ENCODE measurements at regions of chr20 and their contacts with region 1.

Region 1: GRCh38 chr20:17431621-17432364 is 99.4 kb downstream of the BFSP1 start:
- DNase-seq: peak; percentile 47
- H3K4me3 ChIP-seq: no peak overlapping the region
- H3K27ac ChIP-seq: no peak overlapping the region
- H3K4me1 ChIP-seq: no peaks in the 10 kb centered on the region
- H3K27me3 ChIP-seq: peaks cover 73% of the 10 kb centered on the region
- CTCF ChIP-seq: peak; percentile 90

Region 2: GRCh38 chr20:16801919-16802911 is 629.6 kb before region 1 on chr20:
- intact Hi-C with region 1: loop called (anchors 2 kb)
- DNase-seq: peak; percentile 29
- H3K4me3 ChIP-seq: no peak overlapping the region
- H3K27ac ChIP-seq: no peak overlapping the region
- H3K4me1 ChIP-seq: no peaks in the 10 kb centered on the region
- H3K27me3 ChIP-seq: peaks cover 85% of the 10 kb centered on the region
- CTCF ChIP-seq: peak; percentile 90

Region 3: DNA sequence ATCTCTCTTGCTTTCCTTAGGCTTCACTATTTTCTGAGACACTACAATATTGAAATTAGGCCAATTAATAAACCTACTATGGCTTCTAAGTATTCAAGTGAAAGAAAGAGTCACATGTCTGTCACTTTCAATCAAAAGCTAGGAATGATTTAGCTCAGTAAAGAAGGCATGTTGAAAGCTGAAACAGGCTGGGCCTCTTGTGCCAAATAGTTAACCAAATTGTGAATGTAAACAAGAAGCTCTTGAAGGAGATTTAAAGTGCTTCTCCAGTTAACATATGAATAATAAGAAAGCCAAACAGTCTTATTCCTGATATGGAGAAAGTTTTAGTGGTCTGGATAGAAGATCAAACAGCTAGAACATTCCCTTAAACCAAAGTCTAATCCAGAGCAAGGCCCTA is 447.3 kb before region 1 on chr20:
- intact Hi-C with region 1: no loop called
- DNase-seq: no peak
- H3K4me3 ChIP-seq: no peak overlapping the region
- H3K27ac ChIP-seq: no peak overlapping the region
- H3K4me1 ChIP-seq: no peaks in the 10 kb centered on the region
- H3K27me3 ChIP-seq: no peaks in the 10 kb centered on the region
- CTCF ChIP-seq: no peak